Psoas muscle (tissue), 8 donors: ENCODE measurements at regions of chr1 and their contacts with region 1.

Region 1: DNA sequence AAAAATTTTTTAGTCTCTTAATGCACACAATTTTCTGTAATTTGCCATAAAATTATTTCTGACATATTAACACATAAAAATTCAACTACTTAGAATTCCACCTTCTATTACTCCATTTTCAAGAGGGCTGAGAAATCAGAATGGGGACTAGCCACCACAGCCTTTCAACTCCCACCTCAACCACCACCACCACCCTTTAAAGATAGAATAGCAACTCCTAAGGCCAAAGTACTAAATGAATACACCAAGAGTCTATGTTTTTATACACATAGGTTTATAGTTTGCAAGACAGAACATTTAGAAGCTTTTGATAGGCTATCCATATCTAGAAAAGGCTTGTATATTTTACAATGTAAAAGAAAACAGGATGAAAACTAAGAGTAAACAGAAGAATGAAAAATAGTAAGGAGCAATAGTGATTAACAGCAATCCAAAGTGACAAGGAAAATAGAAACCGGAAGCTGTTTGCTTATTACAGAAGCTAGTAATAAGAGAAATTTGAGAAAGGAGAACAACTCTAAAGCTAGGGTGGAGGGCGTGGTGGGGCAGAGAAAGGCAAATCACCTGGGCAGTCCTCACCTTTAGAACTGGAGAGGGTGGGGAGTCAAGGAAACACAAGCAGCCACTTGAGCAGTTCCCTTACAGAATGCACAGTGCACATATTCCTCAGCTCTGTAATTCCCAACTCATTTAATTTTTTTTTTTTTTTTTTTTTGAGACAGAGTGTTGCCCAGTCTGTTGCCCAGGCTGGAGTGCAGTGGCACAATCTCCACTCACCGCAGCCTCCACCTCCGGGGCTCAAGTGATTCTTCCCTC is 27.7 kb downstream of the EPS15 start:
- DNase-seq: no peak
- ATAC-seq: no peak
- H3K4me3 ChIP-seq: no peak overlapping the region
- H3K27ac ChIP-seq: peak overlapping the region; percentile 54
- H3K4me1 ChIP-seq: peaks cover 62% of the 10 kb centered on the region
- H3K27me3 ChIP-seq: no peaks in the 10 kb centered on the region
- CTCF ChIP-seq: no peak

Region 2: GRCh38 chr1:51433269-51433971 is 58.0 kb before region 1 on chr1:
- intact Hi-C with region 1: no loop called
- DNase-seq: no peak
- ATAC-seq: peak in 1 of 4 donors; percentile 39
- H3K4me3 ChIP-seq: no peak overlapping the region
- H3K27ac ChIP-seq: peak overlapping the region; percentile 36
- H3K4me1 ChIP-seq: no peaks in the 10 kb centered on the region
- H3K27me3 ChIP-seq: no peaks in the 10 kb centered on the region
- CTCF ChIP-seq: no peak

Region 3: DNA sequence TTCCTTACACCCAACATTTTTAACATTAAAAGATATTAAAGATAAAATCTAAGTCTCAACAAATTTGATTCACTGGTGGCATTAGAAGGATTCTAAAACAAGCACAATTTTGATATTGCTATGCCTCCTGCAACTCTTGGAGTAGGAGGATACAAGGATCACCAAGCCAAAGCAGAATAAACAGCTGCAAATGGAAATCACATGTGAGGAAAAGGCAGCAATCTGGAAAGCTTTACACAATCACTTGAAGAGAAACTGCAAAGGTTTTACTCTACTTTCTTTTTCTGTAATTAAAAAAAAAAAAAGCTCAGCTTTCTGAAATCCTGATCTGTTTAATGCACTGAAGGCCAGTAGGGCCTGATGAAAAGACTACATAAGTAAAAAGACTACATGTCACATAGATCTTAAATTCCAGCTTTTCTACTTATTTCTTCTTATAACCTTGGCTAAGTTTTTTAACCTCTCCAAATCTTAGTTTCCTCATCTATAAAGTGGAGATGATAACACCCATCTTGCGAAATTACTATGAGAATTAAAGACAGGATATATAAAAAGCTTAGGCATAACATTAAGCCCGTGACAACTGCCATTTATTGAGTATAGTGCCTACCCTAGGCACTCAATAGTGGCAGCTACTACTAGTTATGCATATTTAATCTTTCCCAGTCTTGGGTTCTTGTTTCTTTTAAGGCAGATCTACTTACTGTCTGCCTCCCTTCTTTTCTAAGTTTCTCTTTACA is 45.9 kb before region 1 on chr1:
- intact Hi-C with region 1: no loop called
- DNase-seq: no peak
- ATAC-seq: no peak
- H3K4me3 ChIP-seq: no peak overlapping the region
- H3K27ac ChIP-seq: no peak overlapping the region
- H3K4me1 ChIP-seq: peaks cover 11% of the 10 kb centered on the region
- H3K27me3 ChIP-seq: no peaks in the 10 kb centered on the region
- CTCF ChIP-seq: no peak

Region 4: DNA sequence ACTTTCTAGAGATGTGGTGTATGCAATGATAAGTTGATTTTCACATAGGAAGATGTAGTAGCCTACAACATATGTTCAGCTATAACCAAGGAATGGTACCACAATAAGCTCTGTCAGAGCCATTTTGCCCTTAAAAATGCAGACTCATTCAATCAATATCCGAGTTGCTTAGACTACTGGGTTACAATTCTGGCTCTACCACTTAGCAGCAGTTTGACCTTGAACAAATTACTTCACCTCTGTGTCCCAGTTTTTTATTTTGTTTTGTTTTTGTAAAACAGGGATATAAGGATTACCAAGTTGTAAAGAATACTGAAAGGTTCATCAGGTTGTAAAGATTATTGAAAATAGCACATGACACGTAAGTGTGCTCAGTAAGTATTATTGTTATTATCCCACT is 18.4 kb after region 1 on chr1:
- intact Hi-C with region 1: loop called in 1 of 2 experiments (anchors 2 kb)
- DNase-seq: no peak
- ATAC-seq: no peak
- H3K4me3 ChIP-seq: no peak overlapping the region
- H3K27ac ChIP-seq: peak overlapping the region; percentile 17
- H3K4me1 ChIP-seq: peaks cover 63% of the 10 kb centered on the region
- H3K27me3 ChIP-seq: no peaks in the 10 kb centered on the region
- CTCF ChIP-seq: no peak

Region 5: GRCh38 chr1:51564124-51564523 is 72.8 kb after region 1 on chr1:
- intact Hi-C with region 1: no loop called
- DNase-seq: no peak
- ATAC-seq: no peak
- H3K4me3 ChIP-seq: no peak overlapping the region
- H3K27ac ChIP-seq: peak overlapping the region; percentile 53
- H3K4me1 ChIP-seq: peaks cover 60% of the 10 kb centered on the region
- H3K27me3 ChIP-seq: no peaks in the 10 kb centered on the region
- CTCF ChIP-seq: no peak

Region 6: DNA sequence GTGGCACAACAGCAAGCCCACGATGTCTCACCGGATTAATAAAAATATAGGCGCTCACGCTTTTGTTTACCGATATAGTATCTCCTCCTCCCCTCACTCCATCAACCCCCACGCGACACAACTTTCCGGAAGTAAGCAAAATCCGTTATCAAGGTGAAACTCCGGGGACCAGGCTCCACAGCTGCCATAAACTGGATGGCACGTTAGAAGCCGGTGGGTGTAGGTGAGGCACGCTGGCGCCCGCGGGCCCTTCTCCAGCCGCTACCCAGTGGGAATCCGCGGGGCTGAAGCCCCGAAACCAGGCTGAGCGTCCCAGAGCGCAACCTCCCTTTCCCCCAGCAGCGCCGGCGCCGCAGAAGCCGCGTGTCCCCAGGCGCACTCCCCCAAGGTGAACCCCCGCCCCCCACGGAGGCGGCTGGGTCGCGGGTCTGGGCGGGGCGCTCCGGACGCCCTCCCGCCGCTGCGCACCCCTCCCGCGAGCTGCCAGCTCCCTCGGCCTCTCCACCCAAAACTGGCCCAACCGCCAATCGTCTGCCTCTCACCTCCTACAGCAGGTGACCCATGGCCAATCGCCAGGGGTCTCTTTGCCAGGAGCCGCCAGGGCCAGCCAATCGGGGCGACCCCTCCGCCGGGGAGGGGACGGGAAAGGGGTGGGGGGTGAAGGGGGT is 237.9 kb after region 1 on chr1:
- intact Hi-C with region 1: no loop called
- DNase-seq: peak; percentile 74 to 85
- ATAC-seq: peak; percentile 17 to 58 (median 50)
- H3K4me3 ChIP-seq: peak overlapping the region; percentile 66
- H3K27ac ChIP-seq: peak overlapping the region; percentile 79
- H3K4me1 ChIP-seq: peaks cover 77% of the 10 kb centered on the region
- H3K27me3 ChIP-seq: no peaks in the 10 kb centered on the region
- CTCF ChIP-seq: no peak